ENCODE measurements at regions of chr12 and their contacts with region 1.

Region 1: DNA sequence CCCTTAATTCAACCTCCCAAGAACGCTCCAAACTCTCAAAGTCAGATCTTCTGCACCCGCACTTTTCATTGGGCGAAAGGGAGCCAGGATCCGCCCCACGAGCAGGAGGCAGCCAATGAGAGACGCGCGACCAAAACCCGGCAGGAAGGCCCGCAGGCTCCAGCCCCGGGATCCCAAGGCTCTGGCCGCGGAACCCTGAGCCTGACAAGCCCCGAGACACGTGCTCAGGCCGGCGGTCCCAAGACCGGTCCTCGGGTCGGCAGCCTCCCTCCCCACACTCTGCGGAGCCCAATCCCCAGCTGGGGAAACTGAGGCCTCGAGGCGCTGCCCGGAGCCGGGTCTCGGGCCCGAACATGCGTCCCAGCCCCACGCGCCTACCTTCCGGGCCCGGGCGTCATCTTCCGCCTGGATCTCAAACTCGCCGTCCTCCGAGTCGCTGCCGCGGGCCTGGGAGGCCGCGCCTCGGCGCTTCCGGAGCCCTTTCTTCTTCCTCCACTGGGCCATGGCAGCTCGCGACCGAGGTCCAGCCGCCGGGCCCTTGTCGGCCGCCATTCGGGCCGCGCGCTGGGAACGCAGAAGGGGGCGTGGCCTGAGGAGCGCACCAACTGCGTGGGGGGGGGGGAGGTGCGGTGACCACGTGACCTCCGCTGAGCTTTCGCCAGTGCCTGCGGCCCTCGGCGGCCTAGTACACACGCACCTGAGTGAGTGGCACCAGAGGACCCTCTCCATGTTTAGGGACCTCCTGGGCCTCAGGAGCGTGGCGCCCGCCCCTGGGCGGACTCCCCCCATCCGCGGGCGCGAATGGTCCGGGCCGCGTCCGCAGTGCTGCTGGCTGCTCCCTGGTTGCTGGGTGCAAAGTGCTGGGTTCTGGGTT is at the starts of genes DDX54 and RITA1:
- DNase-seq: peak; percentile 74 to 92 (median 83)
- ATAC-seq: peak; percentile 85 to 86 (median 85)
- H3K4me3 ChIP-seq: peak within 1 kb of the TSS; percentile 80 to 99
- H3K4me3 Mint-ChIP-seq: peak within 1 kb of the TSS; percentile 90 to 95 (median 94)
- H3K27ac ChIP-seq: peak within 1 kb of the TSS; percentile 95
- H3K27ac Mint-ChIP-seq: peak within 1 kb of the TSS; percentile 94 to 95
- H3K4me1 ChIP-seq: peaks cover 11 to 47% of the 10 kb centered on the region in 2 experiments
- H3K4me1 Mint-ChIP-seq: peaks cover 31 to 53% (median 43%) of the 10 kb centered on the region in 3 donors
- H3K27me3 ChIP-seq: peaks cover 0 to 2% of the 10 kb centered on the region in 2 experiments
- H3K27me3 Mint-ChIP-seq: no peaks in the 10 kb centered on the region
- total RNA-seq, gene DDX54: 86.1 to 100.0 (median 88.0) TPM
- total RNA-seq, gene RITA1: 7.8 to 17.8 (median 13.8) TPM

Region 2: GRCh38 chr12:113221181-113221997 is 36.3 kb after region 1 on chr12 and contains the start of gene TPCN1:
- CTCF ChIA-PET with region 1: interaction called, 3 read pairs
- POLR2A ChIA-PET with region 1: interaction called in 1 of 2 experiments, 10 read pairs
- DNase-seq: peak; percentile 95 to 100 (median 98)
- ATAC-seq: peak; percentile 93 to 95 (median 94)
- H3K4me3 ChIP-seq: peak within 1 kb of the TSS; percentile 82 to 97
- H3K4me3 Mint-ChIP-seq: peak within 1 kb of the TSS; percentile 89 to 90 (median 89)
- H3K27ac ChIP-seq: peak within 1 kb of the TSS; percentile 55
- H3K27ac Mint-ChIP-seq: peak within 1 kb of the TSS; percentile 88 to 93
- H3K4me1 ChIP-seq: peaks cover 34 to 38% of the 10 kb centered on the region in 2 experiments
- H3K4me1 Mint-ChIP-seq: peaks cover 37 to 47% (median 43%) of the 10 kb centered on the region in 3 donors
- H3K27me3 ChIP-seq: no peaks in the 10 kb centered on the region
- H3K27me3 Mint-ChIP-seq: no peaks in the 10 kb centered on the region
- total RNA-seq, gene TPCN1: 58.8 to 81.6 (median 73.5) TPM

Measured in T-cell (primary cell).